OCI-LY7 (cell line): ENCODE measurements at regions of chr3 and their contacts with region 1.

Region 1: GRCh38 chr3:50192689-50193141 is 1.3 kb downstream of the GNAT1 start:
- DNase-seq: peak; percentile 79
- H3K4me3 ChIP-seq: no peak overlapping the region
- H3K27ac ChIP-seq: no peak overlapping the region
- H3K4me1 ChIP-seq: peaks cover 19% of the 10 kb centered on the region
- CTCF ChIP-seq: peak; percentile 96

Region 2: DNA sequence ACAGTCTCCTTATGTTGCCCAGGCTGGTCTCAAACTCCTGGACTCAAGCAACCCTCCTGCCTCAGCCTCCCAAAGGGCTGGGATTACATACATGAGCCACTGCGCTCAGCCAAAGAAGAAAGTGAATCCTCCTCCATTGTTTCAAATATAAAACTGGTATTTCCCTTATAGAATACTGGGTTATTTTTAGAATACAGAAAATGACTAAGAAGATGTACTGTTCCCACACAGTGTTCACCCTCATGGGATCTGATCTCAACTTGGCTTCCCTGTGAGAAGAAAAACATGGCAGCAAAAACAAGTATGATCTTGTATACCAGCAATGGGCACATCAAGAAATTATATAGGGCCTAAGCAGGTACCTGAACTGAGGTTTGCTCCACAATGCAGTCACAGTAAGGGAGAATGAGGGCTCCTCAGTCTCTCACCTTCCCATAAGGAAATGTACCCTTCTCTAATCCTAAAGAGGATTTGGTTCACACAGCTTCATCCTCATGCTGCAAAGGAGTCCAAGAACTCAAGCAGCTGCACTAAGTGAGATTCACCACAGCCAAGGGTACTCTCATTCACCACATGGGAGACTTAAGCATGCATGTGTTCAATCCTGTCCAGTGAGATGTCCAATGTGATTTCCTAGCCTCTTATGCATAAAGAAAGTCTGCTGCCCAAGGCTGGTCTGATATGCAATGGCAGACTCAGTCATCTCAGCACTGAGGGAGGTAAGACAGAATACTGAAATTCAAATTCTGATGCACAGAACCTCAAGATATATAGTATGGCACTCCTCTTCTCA is 878.6 kb before region 1 on chr3:
- CTCF ChIA-PET with region 1: no interaction called
- POLR2A ChIA-PET with region 1: no interaction called
- intact Hi-C with region 1: no loop called
- DNase-seq: no peak
- H3K4me3 ChIP-seq: no peak overlapping the region
- H3K27ac ChIP-seq: no peak overlapping the region
- H3K4me1 ChIP-seq: no peaks in the 10 kb centered on the region
- CTCF ChIP-seq: no peak

Region 3: GRCh38 chr3:49976942-49977341 is 215.8 kb before region 1 on chr3:
- CTCF ChIA-PET with region 1: no interaction called
- POLR2A ChIA-PET with region 1: no interaction called
- intact Hi-C with region 1: no loop called
- DNase-seq: no peak
- H3K4me3 ChIP-seq: no peak overlapping the region
- H3K27ac ChIP-seq: no peak overlapping the region
- H3K4me1 ChIP-seq: no peaks in the 10 kb centered on the region
- CTCF ChIP-seq: no peak

Region 4: DNA sequence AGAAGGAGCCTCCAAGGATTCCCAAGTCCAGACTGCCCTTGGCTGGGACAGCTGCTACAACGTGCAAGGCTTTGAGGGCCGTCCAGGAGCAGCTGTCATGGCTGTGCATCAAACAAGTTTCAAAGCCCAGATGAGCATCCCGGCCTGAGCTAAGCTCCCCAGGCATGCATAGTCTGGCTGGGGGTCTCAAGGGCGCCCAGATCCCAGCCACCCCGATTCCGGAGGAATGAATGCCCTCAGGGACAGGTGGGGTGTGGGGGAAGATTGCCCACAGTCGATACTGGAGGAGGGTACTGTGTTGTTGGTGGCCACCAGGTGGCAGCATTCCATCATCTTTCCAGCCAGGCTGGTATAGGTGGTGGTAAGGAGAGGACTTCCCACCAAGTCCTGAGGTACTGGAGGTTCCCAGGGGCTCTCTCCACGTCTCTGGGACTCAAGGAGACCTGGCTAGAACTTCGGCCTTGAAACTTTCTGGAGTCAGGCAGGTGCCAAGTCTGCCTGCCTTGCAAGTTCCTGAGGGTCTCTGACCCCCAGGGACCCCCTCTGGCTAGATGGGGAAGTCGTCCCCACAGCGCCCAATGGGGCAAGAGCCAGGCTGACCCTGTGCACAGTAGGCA is 71.2 kb before region 1 on chr3:
- CTCF ChIA-PET with region 1: interaction called, 4 read pairs
- POLR2A ChIA-PET with region 1: interaction called, 4 read pairs
- intact Hi-C with region 1: loop called (anchors 1 kb)
- DNase-seq: peak; percentile 78
- H3K4me3 ChIP-seq: no peak overlapping the region
- H3K27ac ChIP-seq: no peak overlapping the region
- H3K4me1 ChIP-seq: no peaks in the 10 kb centered on the region
- CTCF ChIP-seq: peak; percentile 90

Region 5: DNA sequence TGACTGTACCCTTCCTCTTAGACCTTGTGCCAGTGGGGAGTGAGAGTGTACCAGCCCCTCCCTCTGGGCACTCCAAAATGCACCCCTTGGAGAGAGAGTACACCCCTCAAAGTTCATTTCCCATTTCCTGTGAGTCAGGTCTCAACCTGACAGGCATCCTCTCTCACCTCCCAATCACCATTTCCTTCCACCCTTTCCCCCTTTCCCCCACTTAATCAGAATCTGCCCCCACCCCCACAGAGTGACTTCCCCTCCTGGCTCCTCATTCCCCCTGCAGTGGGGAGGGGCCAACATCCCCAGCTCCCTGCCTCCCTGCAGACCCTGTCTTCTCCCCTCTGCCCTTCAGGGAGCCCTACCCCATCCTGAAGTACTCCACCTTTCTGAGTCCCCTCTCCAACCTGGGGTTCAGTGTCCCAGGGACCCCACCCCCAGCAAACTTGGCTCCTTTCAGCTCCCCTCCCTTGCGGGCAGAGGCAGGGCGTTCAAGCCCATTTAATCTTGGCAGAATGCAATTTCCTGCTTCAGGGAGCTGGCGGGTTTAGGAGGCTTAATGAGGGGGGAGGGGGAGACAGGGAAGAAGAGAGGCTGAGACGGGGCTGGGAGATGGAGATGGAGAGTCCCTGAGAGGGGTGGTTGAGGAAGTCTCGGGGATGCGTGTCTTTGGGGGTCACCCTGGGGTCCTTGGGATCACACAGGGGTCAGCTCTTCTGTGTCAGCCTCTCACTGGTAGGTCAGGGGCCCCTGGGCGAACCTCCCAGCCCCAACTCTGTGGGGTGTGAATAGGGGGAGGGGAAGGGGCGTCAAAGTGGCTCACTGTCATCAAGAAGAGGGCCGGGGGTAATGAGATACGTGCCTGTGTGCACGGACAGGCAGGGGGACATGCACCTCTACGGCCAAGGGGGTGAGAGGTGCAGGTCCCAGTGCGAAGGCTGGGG is 54.2 kb before region 1 on chr3:
- CTCF ChIA-PET with region 1: no interaction called
- POLR2A ChIA-PET with region 1: no interaction called
- intact Hi-C with region 1: loop called (anchors 5 kb)
- DNase-seq: no peak
- H3K4me3 ChIP-seq: no peak overlapping the region
- H3K27ac ChIP-seq: no peak overlapping the region
- H3K4me1 ChIP-seq: peaks cover 12% of the 10 kb centered on the region
- CTCF ChIP-seq: no peak

Region 6: GRCh38 chr3:50211930-50212329 is 19.2 kb after region 1 on chr3:
- CTCF ChIA-PET with region 1: interaction called, 11 read pairs
- POLR2A ChIA-PET with region 1: interaction called, 4 read pairs
- intact Hi-C with region 1: no loop called
- DNase-seq: no peak
- H3K4me3 ChIP-seq: no peak overlapping the region
- H3K27ac ChIP-seq: no peak overlapping the region
- H3K4me1 ChIP-seq: no peaks in the 10 kb centered on the region
- CTCF ChIP-seq: no peak

Region 7: GRCh38 chr3:50221411-50222168 is 28.9 kb after region 1 on chr3:
- CTCF ChIA-PET with region 1: interaction called, 23 read pairs
- POLR2A ChIA-PET with region 1: interaction called, 5 read pairs
- intact Hi-C with region 1: loop called (anchors 1 kb)
- DNase-seq: peak; percentile 27
- H3K4me3 ChIP-seq: no peak overlapping the region
- H3K27ac ChIP-seq: no peak overlapping the region
- H3K4me1 ChIP-seq: peaks cover 25% of the 10 kb centered on the region
- CTCF ChIP-seq: peak; percentile 54

Region 8: DNA sequence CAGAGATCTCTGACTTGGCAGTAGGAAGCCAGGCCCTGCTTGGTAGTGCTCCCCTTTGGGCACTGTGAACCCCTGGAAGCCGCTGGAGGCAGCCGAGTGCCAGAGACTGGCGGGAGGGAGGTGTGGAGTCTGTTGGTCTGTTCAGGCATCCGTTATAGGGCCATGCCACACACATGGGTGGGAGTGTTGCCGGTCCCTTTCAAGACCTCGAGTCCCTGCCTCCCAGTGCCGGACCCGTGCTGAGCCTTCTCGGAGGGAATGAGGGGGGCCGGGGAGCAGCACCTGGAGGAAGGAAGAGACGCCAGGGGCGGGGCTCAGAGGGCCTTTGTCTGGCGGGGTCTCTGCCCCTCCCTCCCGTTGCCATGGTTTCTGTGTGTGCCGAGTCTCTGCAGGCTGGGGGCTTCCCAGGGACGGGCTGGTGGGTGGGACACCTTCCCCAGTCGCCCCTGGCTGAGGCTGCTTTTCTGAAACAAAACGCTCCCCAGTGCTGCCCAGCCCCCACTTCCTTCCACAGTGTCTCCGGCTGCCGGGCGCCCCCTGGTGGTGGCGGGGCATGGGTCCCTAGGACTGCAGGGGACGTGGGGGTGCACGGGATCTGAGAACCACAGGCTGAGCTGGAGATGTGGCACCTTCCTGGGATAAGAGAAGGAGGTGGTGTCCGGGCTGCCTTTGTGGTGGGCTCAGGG is 53.3 kb after region 1 on chr3:
- CTCF ChIA-PET with region 1: interaction called, 8 read pairs
- POLR2A ChIA-PET with region 1: interaction called, 12 read pairs
- intact Hi-C with region 1: no loop called
- DNase-seq: peak; percentile 89
- H3K4me3 ChIP-seq: peak overlapping the region; percentile 64
- H3K27ac ChIP-seq: peak overlapping the region; percentile 79
- H3K4me1 ChIP-seq: peaks cover 67% of the 10 kb centered on the region
- CTCF ChIP-seq: peak; percentile 97

Region 9: GRCh38 chr3:50272911-50273693 is 80.4 kb after region 1 on chr3:
- CTCF ChIA-PET with region 1: interaction called, 5 read pairs
- POLR2A ChIA-PET with region 1: no interaction called
- intact Hi-C with region 1: loop called (anchors 1 kb)
- DNase-seq: peak; percentile 83
- H3K4me3 ChIP-seq: no peak overlapping the region
- H3K27ac ChIP-seq: no peak overlapping the region
- H3K4me1 ChIP-seq: peaks cover 5% of the 10 kb centered on the region
- CTCF ChIP-seq: peak; percentile 93